GM10248 (cell line): ENCODE measurements at regions of chr1 and their contacts with region 1.

Region 1: GRCh38 chr1:84944767-84945486 is 51.9 kb upstream of the LPAR3 start:
- DNase-seq: peak; percentile 63
- CTCF ChIP-seq: peak; percentile 86

Region 2: DNA sequence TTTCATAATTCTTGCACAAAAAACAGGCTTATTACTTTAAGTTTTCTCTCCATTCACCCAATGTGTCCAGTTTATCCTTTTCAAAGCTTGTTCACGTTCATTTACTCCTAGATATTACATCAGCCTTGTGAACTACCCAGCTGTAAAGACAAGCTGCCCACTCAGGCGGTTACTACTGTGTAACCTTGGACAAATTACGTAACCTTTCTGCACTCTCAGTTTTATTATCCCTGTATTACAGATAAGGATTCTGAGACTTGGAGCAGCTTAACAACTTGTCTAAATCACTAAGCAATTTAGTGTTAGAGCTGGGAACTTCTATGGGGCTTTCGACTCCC is 31.4 kb before region 1 on chr1:
- CTCF ChIA-PET with region 1: no interaction called
- POLR2A ChIA-PET with region 1: no interaction called
- DNase-seq: no peak
- CTCF ChIP-seq: no peak

Region 3: DNA sequence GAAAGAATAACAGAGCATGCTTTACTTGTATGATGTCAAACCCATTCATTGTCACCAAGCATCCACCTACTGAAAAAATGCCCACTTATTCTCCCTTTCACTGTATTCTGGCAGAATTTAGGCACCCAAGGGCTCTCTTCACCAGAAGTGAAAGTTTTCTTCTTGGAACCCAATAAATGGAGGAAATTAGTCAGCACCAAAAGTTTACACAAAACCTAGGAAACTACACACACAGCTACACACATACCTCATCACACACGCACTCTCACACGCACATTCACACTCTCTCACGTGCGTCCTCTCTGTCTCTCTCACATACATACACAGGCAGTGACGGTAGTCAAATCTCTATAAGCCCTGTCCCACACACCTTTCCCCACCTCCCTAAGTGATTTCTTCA is 14.4 kb after region 1 on chr1:
- CTCF ChIA-PET with region 1: interaction called, 141 read pairs
- POLR2A ChIA-PET with region 1: no interaction called
- DNase-seq: no peak
- CTCF ChIP-seq: no peak

Region 4: GRCh38 chr1:84996846-84997666 is 52.1 kb after region 1 on chr1 and contains the start of gene MCOLN2:
- CTCF ChIA-PET with region 1: interaction called, 28 read pairs
- POLR2A ChIA-PET with region 1: no interaction called
- DNase-seq: peak; percentile 88
- CTCF ChIP-seq: peak; percentile 21

Region 5: GRCh38 chr1:85061711-85062424 is 116.9 kb after region 1 on chr1:
- CTCF ChIA-PET with region 1: interaction called, 13 read pairs
- POLR2A ChIA-PET with region 1: no interaction called
- DNase-seq: peak; percentile 94
- CTCF ChIP-seq: no peak

Region 6: DNA sequence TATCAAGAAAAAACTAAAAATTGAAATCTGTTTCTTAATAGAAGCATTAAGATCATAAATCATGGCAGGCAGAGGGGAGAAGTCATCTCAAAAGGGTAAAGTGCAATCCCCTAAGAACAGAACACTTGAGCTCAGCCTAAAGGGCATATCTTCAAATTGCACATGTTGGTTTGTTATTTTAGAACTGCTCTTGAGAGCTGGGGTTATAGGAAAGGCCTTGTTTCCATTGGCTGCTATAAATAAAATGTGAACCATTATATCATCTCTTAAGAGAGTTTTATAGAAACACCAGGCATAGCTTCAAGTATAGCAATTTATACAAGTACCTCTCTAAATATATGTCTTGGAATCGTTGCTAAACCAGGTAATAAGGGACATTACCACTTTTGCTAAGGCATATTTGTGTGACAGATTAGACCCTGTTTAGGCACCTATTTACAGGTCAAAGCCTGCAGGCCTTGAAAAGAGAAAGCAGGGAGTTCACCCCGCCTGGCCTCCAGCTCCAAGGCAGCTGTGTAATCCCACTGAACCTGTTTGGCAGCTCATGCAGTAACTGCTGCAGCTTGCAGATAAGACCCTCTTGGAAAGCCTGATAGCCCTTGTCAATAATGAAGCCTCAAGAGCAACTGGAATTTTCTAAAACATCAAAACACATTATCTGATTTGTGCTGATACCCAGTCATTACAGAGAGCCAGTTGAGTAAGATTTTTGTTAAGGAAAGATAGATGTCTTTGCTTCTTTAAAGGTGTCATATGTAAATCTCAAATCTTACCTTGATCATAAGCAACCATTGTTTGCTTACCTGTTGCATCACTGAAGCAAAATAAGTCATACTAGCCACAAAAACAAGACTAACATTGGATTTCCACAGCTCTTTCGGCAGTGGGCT is 280.1 kb after region 1 on chr1:
- CTCF ChIA-PET with region 1: interaction called, 10 read pairs
- POLR2A ChIA-PET with region 1: no interaction called
- DNase-seq: no peak
- CTCF ChIP-seq: no peak

Region 7: DNA sequence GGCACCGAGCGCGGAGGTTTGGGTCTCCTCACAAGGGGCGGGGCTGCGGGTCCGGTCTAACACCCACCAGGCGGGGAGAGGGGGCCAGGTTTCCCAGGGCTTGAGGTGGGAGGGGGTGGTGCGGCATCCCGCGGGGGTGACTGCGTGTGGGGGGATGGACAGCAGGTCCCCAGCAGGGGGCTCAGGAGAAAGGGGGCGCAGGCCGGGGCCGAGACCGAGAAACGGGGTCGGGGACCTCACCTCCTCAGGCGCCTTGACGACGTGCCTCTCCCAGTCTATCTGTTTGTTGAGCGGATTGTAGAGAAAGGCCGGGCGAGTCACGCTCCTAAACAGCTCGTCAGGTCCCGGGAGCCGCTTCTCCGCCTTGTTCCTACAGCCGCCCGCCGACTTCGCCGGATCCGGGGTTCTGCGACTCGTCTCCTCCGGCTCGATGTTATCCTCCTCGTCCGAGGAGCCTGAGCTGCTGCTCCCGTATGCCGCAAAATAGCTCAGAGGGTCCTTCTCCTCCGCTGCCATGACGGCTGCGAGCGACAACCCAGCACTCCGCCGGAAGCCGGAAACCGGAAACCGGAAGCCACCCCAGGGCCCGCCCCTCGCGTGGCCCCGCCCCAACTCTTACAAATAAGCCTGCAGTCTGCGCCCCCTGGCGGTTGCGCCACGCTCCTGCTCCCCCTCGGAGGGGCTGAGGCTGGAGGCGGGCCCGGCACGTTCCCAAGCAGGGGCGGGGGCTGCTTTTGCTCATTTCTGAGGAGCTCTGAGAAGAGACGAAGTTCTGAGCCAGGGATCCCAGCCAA is 314.4 kb after region 1 on chr1 and contains the start of gene C1orf52:
- CTCF ChIA-PET with region 1: interaction called, 187 read pairs
- POLR2A ChIA-PET with region 1: no interaction called
- DNase-seq: peak; percentile 93
- CTCF ChIP-seq: peak; percentile 95